ENCODE measurements at regions of chr20 and their contacts with region 1.

Region 1: DNA sequence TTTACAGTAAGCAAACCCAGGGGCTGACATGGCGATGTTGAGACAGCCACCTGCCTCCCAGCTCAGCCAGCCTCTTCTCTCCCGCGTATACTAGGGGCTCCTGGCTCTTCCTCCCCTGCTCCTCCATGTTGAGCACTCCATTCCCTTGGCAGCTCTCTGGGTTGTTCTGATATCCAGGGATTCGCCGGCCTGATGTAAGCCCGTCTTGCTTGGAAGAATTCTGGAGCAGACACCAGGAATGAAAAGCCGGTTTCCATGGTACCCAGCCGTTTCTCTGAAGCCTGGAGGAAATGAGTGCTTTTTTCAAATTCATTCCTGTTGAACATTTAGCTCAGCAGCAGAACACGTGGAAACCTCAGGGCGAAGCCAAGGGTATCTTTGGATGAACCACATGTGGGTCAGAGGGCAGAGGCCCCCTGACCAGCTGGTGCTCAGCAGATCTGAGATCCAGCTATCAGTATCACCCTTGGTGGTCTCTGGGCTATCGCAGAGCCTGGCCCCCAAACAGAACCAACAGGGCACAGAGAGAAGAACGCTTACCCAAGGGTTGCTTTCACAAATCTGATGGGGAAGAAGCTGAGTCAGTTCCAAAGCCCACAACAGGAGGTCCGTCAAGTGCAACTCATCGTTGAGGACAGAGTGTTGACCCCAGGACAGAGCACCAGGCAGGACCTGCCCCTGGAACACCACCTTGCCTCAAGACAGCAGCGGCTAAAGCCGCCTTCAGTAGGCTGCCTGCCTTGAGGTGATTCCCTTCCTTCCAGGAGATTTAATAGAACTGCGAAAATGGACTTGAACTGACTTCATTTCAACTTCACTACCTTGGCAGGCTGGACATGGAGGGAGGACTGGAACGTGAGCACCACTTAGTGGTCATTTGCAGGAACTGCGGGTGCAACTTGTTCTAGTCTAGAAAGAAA is 96.1 kb upstream of the RIN2 start:
- DNase-seq: peak; percentile 40
- H3K4me3 ChIP-seq: no peak overlapping the region
- H3K27ac ChIP-seq: no peak overlapping the region
- H3K4me1 ChIP-seq: no peaks in the 10 kb centered on the region
- H3K27me3 ChIP-seq: no peaks in the 10 kb centered on the region
- CTCF ChIP-seq: peak; percentile 99 to 100

Region 2: GRCh38 chr20:18412221-18412901 is 1249.6 kb before region 1 on chr20:
- CTCF ChIA-PET with region 1: no interaction called
- dilution Hi-C with region 1: no loop called
- in situ Hi-C with region 1: loop called in 1 of 2 experiments (anchors 25 kb)
- intact Hi-C with region 1: loop called (anchors 1 kb)
- DNase-seq: no peak
- H3K4me3 ChIP-seq: no peak overlapping the region
- H3K27ac ChIP-seq: no peak overlapping the region
- H3K4me1 ChIP-seq: peaks cover 19% of the 10 kb centered on the region
- H3K27me3 ChIP-seq: no peaks in the 10 kb centered on the region
- CTCF ChIP-seq: no peak

Region 3: DNA sequence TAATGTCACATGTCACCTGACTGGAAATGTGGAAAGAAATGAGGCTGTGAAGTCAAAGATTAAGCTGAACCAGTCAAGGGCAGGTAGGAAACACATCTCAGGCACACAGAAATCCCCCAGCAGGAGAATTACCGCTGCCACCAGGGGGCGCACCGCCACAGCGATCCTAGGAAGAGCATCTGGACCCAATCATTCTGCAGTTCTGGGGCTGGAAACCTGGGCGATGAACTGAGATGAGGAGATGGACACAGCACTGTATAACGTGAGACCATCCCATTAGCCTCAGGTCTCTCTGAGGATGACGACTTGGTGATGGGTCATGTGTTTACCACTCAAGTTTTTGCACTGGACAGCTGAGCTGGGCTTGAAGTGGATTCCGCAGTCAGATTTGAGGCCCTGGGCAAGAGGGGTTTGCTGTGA is 456.0 kb before region 1 on chr20:
- CTCF ChIA-PET with region 1: no interaction called
- dilution Hi-C with region 1: no loop called
- in situ Hi-C with region 1: loop called (anchors 5 to 10 kb)
- intact Hi-C with region 1: loop called (anchors 1 kb)
- DNase-seq: peak; percentile 32
- H3K4me3 ChIP-seq: no peak overlapping the region
- H3K27ac ChIP-seq: no peak overlapping the region
- H3K4me1 ChIP-seq: no peaks in the 10 kb centered on the region
- H3K27me3 ChIP-seq: peaks cover 7% of the 10 kb centered on the region
- CTCF ChIP-seq: peak; percentile 81 to 89

Region 4: GRCh38 chr20:19588732-19589131 is 73.2 kb before region 1 on chr20:
- CTCF ChIA-PET with region 1: no interaction called
- dilution Hi-C with region 1: no loop called
- in situ Hi-C with region 1: no loop called
- intact Hi-C with region 1: loop called (anchors 2 kb)
- DNase-seq: no peak
- H3K4me3 ChIP-seq: no peak overlapping the region
- H3K27ac ChIP-seq: no peak overlapping the region
- H3K4me1 ChIP-seq: no peaks in the 10 kb centered on the region
- H3K27me3 ChIP-seq: no peaks in the 10 kb centered on the region
- CTCF ChIP-seq: peak in 1 of 2 donors; percentile 9

Region 5: GRCh38 chr20:19628570-19629169 is 33.3 kb before region 1 on chr20:
- CTCF ChIA-PET with region 1: no interaction called
- dilution Hi-C with region 1: no loop called
- in situ Hi-C with region 1: no loop called
- intact Hi-C with region 1: loop called (anchors 1 kb)
- DNase-seq: peak; percentile 64
- H3K4me3 ChIP-seq: no peak overlapping the region
- H3K27ac ChIP-seq: no peak overlapping the region
- H3K4me1 ChIP-seq: no peaks in the 10 kb centered on the region
- H3K27me3 ChIP-seq: no peaks in the 10 kb centered on the region
- CTCF ChIP-seq: peak; percentile 80 to 89